OCI-LY7 (cell line): ENCODE measurements at regions of chr5 and their contacts with region 1.

Region 1: GRCh38 chr5:98928873-98929696 is at the start of gene CHD1:
- DNase-seq: peak; percentile 94
- H3K4me3 ChIP-seq: peak within 1 kb of the TSS; percentile 76
- H3K27ac ChIP-seq: no peak within 1 kb of the TSS
- H3K4me1 ChIP-seq: peaks cover 4% of the 10 kb centered on the region
- CTCF ChIP-seq: no peak
- total RNA-seq, gene CHD1: 10.3 and 23.3 TPM in 2 replicates

Region 2: GRCh38 chr5:98483301-98483685 is 445.8 kb before region 1 on chr5:
- CTCF ChIA-PET with region 1: no interaction called
- POLR2A ChIA-PET with region 1: no interaction called
- intact Hi-C with region 1: no loop called
- DNase-seq: no peak
- H3K4me3 ChIP-seq: no peak overlapping the region
- H3K27ac ChIP-seq: no peak overlapping the region
- H3K4me1 ChIP-seq: no peaks in the 10 kb centered on the region
- CTCF ChIP-seq: no peak

Region 3: DNA sequence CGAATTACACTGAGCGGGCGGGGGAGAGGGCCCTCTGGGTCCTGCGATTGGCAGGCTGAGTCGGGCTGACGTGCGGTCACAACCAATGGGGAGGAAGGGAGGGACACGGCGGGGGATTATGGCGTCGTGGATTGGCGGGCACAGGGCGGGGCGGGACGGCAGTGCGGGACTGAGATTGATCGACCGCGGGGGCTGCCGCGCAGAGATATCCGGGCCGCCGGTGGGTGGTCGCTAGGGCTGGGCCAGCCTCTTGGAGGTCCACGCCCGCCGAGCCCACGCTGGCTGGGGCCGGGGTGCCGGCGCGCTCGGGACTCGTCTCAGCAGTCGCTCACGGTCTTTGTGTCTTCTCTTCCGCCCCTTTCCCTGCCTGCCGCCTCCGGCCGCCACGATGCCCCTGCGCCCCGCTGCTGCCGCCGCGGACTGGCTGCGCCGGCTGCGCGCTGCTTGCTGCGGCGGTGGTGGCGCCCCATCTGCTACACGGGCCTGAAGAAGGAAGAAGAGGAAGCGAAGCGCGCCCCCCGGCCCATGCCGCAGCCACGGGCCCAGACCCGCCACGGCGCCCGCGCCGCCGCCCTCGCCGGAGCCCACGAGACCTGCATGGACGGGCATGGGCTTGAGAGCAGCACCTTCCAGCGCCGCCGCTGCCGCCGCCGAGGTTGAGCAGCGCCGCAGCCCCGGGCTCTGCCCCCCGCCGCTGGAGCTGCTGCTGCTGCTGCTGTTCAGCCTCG is 155.5 kb before region 1 on chr5 and contains the start of gene RGMB:
- CTCF ChIA-PET with region 1: no interaction called
- POLR2A ChIA-PET with region 1: no interaction called
- intact Hi-C with region 1: loop called (anchors 1 kb)
- DNase-seq: peak; percentile 95
- H3K4me3 ChIP-seq: peak within 1 kb of the TSS; percentile 90
- H3K27ac ChIP-seq: peak within 1 kb of the TSS; percentile 56
- H3K4me1 ChIP-seq: peaks cover 40% of the 10 kb centered on the region
- CTCF ChIP-seq: peak; percentile 31; the same call in 1 of the 2 replicates
- total RNA-seq, gene RGMB: 9.2 and 9.3 TPM in 2 replicates

Region 4: GRCh38 chr5:98786191-98786853 is 142.8 kb before region 1 on chr5:
- CTCF ChIA-PET with region 1: no interaction called
- POLR2A ChIA-PET with region 1: no interaction called
- intact Hi-C with region 1: no loop called
- DNase-seq: no peak
- H3K4me3 ChIP-seq: no peak overlapping the region
- H3K27ac ChIP-seq: no peak overlapping the region
- H3K4me1 ChIP-seq: no peaks in the 10 kb centered on the region
- CTCF ChIP-seq: no peak